ENCODE measurements at regions of chr14 and their contacts with region 1.

Region 1: GRCh38 chr14:64478634-64479250 is 13.4 kb downstream of the AKAP5 start:
- DNase-seq: no peak
- H3K4me3 ChIP-seq: no peak overlapping the region
- H3K27ac ChIP-seq: no peak overlapping the region
- H3K27me3 ChIP-seq: no peaks in the 10 kb centered on the region
- CTCF ChIP-seq: peak; percentile 47

Region 2: GRCh38 chr14:64345513-64345912 is 133.2 kb before region 1 on chr14:
- CTCF ChIA-PET with region 1: interaction called, 108 read pairs
- POLR2A ChIA-PET with region 1: no interaction called
- DNase-seq: no peak
- H3K4me3 ChIP-seq: no peak overlapping the region
- H3K27ac ChIP-seq: no peak overlapping the region
- H3K27me3 ChIP-seq: no peaks in the 10 kb centered on the region
- CTCF ChIP-seq: no peak

Region 3: DNA sequence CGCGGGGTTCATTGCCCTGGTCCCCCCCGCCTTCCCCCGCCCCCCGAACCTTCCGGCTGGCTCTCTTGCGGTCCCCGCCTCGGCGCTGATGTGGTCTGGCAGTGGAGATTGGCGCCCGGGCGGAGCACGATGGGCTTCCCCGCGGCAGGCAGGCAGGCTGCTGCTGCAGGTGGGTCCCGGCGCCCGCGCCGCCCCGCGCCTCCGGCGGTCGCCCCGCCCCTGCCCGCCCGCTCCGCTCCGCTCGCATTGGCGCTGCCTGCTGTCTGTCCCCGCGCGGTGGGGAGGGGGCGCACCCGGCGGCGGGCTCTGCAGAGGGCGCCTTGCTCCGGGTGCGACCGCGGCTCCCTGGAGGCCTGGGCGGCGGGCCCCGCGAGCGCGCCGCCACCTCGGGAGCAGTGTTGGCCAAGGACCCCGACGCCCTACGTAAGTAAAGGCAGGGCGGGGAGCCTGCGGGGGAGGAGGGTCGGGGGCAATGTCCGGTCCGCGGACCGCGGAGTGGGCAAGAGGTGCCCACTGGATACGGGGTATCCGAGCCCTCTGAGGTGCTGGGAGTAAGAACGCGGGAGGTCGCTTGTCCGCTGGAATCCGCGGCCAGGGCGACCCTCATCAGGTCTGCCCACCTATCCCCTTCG is 13.4 kb before region 1 on chr14 and contains the start of gene AKAP5:
- CTCF ChIA-PET with region 1: interaction called, 11 read pairs
- POLR2A ChIA-PET with region 1: no interaction called
- DNase-seq: no peak
- H3K4me3 ChIP-seq: peak within 1 kb of the TSS; percentile 76
- H3K27ac ChIP-seq: no peak within 1 kb of the TSS
- H3K27me3 ChIP-seq: no peaks in the 10 kb centered on the region
- CTCF ChIP-seq: no peak
- polyA plus RNA-seq, gene AKAP5: 0.58 and 0.77 TPM in 2 replicates

Region 4: DNA sequence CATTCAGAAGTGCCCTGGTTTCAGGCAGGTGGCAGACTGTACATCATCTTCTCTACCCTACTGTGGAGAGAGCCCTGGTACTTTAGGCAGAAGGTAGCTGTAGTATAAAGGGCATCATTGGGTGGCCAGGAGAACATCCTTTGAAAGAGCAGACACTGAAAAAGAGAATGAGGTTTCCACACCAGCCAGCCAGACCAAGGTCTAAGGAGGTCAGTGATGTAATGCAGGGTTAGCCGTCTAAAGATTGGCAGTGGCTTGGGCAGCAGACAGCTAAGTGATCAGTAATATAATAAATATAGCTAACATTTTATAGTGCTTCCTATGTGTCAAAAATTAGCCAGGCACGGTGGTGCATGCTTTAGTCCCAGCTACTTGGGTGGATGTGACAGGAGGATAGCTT is 12.9 kb after region 1 on chr14:
- CTCF ChIA-PET with region 1: interaction called, 13 read pairs
- POLR2A ChIA-PET with region 1: no interaction called
- DNase-seq: no peak
- H3K4me3 ChIP-seq: no peak overlapping the region
- H3K27ac ChIP-seq: no peak overlapping the region
- H3K27me3 ChIP-seq: no peaks in the 10 kb centered on the region
- CTCF ChIP-seq: no peak

Region 5: DNA sequence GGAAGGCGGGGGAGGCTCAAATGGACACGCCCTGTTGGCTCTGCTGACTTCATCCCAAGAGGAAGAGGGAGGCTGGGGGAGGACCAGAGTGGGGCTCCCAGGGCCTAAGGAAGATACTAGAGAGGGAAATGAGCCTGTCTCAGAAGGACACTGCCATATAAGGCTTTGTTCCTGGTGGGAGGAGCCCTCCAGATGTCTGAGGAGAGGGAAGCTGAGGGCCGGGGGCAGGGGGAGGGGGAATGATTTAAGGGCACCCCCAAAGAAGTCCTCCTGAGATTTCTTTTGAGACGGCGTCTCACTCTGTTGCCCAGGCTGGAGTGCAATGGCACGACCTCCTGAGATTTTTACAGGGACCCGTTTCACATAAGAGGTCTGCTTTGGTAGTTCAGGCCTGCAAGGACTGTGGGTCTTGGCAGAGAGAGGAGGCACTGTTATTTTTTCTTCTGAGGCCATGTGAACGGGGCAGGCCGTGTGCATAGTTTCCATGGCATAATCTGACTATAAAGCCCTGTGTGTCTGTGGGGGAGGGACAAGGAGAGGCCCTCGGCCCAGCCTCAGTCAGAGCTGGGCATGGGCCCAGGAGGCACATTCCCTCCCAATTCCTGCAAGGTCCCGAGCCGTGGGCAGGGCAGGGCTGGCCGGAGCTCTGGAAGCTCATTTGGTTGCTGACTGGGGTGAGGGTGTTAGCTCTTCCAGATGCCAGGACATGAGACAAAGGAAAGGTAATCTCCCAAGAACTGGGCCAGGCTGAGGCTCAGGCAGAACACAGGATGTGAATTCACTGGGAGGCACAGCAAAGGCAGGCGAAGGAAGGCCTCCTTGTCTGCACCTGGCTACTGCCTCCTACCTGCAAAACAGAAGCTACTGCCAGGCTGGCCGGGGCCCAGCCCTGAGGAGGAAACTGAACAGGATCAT is 203.3 kb after region 1 on chr14:
- CTCF ChIA-PET with region 1: no interaction called
- POLR2A ChIA-PET with region 1: no interaction called
- DNase-seq: no peak
- H3K4me3 ChIP-seq: no peak overlapping the region
- H3K27ac ChIP-seq: peak overlapping the region; percentile 57
- H3K27me3 ChIP-seq: peaks cover 4% of the 10 kb centered on the region
- CTCF ChIP-seq: no peak